Endothelial cell of umbilical vein (primary cell): ENCODE measurements at regions of chr2 and their contacts with region 1.

Region 1: GRCh38 chr2:84302513-84303412 is 156.3 kb downstream of the SUCLG1 start:
- DNase-seq: peak; percentile 41
- H3K4me3 ChIP-seq: no peak overlapping the region
- H3K27ac ChIP-seq: no peak overlapping the region
- H3K4me1 ChIP-seq: no peaks in the 10 kb centered on the region
- H3K27me3 ChIP-seq: no peaks in the 10 kb centered on the region
- CTCF ChIP-seq: peak; percentile 74 to 83
- POLR2A ChIP-seq: no peak

Region 2: DNA sequence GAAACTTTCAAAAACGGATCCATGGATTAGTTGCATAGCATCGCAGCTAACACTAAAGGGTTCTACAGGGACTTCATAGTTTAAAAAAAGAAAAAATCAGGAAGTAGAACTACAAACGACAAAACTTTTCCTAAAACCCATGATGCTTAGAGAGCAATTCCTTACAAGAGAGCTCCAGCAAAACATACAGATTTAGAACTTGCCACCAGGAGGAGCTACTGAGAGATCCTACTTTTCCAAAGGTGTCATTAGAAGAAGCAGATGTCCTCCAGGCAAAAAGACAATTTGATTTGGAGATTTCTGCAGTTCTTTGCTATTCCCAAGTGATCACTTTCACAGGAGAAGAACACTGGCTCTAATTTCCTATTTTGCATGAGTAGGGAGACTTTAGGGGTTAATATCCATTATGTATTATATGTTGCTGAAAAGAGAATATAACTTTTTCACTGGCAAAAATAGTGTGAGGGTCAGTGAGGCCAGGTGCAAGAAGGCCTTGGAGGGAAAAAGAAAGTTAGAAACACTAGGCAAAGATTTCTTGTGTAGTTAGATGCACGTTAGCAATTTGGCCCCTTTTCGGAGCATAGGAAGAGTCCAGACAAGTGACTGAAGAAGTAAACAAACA is 279.8 kb before region 1 on chr2:
- CTCF ChIA-PET with region 1: no interaction called
- POLR2A ChIA-PET with region 1: no interaction called
- dilution Hi-C with region 1: no loop called
- intact Hi-C with region 1: loop called (anchors 2 kb)
- DNase-seq: peak; percentile 22
- H3K4me3 ChIP-seq: no peak overlapping the region
- H3K27ac ChIP-seq: no peak overlapping the region
- H3K4me1 ChIP-seq: no peaks in the 10 kb centered on the region
- H3K27me3 ChIP-seq: no peaks in the 10 kb centered on the region
- CTCF ChIP-seq: peak; percentile 41 to 46
- POLR2A ChIP-seq: no peak

Region 3: GRCh38 chr2:84057917-84058560 is 244.7 kb before region 1 on chr2:
- CTCF ChIA-PET with region 1: no interaction called
- POLR2A ChIA-PET with region 1: no interaction called
- dilution Hi-C with region 1: no loop called
- intact Hi-C with region 1: no loop called
- DNase-seq: no peak
- H3K4me3 ChIP-seq: no peak overlapping the region
- H3K27ac ChIP-seq: no peak overlapping the region
- H3K4me1 ChIP-seq: no peaks in the 10 kb centered on the region
- H3K27me3 ChIP-seq: no peaks in the 10 kb centered on the region
- CTCF ChIP-seq: no peak
- POLR2A ChIP-seq: no peak

Region 4: GRCh38 chr2:84077492-84077891 is 225.3 kb before region 1 on chr2:
- CTCF ChIA-PET with region 1: no interaction called
- POLR2A ChIA-PET with region 1: no interaction called
- dilution Hi-C with region 1: no loop called
- intact Hi-C with region 1: no loop called
- DNase-seq: peak; percentile 1
- H3K4me3 ChIP-seq: no peak overlapping the region
- H3K27ac ChIP-seq: no peak overlapping the region
- H3K4me1 ChIP-seq: no peaks in the 10 kb centered on the region
- H3K27me3 ChIP-seq: no peaks in the 10 kb centered on the region
- CTCF ChIP-seq: no peak
- POLR2A ChIP-seq: no peak

Region 5: DNA sequence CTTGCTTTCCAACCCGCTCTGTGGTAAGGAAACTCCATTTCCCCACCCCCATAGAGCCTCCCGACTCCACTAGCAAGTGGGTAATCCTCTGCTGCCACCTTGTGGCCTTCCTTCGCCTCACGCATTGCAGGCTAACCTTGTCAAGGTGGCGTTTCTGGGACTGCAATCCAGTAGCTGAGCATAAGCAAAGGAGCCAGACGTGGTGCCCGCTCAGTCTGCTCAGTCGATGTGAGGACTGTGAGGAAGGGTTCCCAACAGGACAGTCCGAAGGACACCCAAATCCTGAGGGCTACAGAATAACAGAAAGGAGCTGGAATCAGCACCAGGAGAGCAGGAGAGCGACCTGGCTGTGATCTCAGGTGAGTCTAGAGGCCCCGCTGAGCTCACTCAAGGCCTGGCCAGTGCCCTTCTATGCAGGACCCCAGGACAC is 12.2 kb after region 1 on chr2:
- CTCF ChIA-PET with region 1: interaction called, 11 read pairs
- POLR2A ChIA-PET with region 1: no interaction called
- dilution Hi-C with region 1: no loop called
- intact Hi-C with region 1: no loop called
- DNase-seq: peak; percentile 69
- H3K4me3 ChIP-seq: no peak overlapping the region
- H3K27ac ChIP-seq: no peak overlapping the region
- H3K4me1 ChIP-seq: no peaks in the 10 kb centered on the region
- H3K27me3 ChIP-seq: no peaks in the 10 kb centered on the region
- CTCF ChIP-seq: peak; percentile 84 to 88
- POLR2A ChIP-seq: no peak

Region 6: DNA sequence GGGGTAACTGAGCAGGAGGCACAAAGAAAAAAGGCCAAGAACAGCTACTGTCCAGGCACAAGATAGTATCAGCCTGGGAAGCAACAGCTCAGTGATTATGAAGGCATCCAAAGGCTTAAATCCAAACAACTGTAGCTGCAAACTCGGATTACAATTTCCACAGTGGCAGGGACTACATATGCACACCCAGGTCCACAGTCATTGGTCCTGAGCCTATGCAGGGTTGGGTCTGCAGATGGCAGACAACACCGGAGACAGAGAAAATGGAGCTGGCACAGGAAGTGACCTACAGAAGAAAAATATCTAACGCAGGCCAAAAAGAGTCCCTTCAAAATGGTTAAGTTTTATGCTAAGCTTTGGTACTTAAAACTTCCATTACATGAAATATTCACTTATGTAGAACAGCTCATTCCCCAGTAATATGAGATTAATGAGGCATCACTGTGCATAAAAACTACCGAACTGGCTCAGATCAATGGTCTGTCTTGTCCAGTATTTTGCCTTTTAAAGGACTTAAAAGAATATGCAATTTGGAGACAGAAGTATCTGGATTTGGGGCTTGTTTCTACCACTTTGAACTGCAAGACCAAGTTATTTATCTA is 24.2 kb after region 1 on chr2:
- CTCF ChIA-PET with region 1: no interaction called
- POLR2A ChIA-PET with region 1: no interaction called
- dilution Hi-C with region 1: no loop called
- intact Hi-C with region 1: loop called (anchors 1 kb)
- DNase-seq: no peak
- H3K4me3 ChIP-seq: no peak overlapping the region
- H3K27ac ChIP-seq: no peak overlapping the region
- H3K4me1 ChIP-seq: no peaks in the 10 kb centered on the region
- H3K27me3 ChIP-seq: no peaks in the 10 kb centered on the region
- CTCF ChIP-seq: no peak
- POLR2A ChIP-seq: no peak